HepG2 (cell line): ENCODE measurements at regions of chr1 and their contacts with region 1.

Region 1: DNA sequence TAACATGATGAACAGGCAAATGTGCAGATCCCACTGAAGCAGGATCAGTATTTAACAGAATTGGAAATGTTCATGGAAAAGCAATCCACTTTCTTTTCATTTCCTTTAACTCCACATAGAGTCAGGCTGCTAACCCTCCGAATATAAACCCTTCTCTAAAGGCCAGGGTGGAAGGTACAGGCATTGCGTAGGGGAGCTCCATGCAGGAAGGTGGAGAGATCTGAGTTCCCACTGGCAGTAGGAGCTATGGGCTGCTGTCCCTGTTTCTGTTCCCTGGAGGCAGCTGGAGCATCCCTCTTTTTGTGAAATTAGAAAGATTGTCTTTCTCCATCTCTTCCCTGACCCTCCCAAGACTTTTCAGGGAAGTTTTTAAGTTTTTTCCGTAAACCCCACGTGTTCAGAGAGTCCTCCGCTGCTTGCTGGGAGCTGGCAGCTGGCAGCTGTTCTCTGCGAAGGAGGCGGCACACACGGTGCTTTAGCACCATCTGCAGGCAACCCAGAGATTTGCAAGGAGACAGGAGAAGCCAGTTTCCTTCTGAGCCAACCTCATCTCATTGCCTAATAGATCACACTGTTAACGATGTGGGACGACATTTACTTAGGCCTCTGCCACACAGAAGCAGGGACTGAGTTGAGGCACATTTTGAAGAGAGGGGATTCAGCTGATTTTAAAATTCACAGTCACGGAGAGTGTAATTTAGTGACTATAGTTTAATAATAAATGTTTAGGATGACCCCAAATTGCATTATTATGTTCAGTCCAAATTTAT is 55.4 kb upstream of the HOOK1 start:
- DNase-seq: peak; percentile 66
- ATAC-seq: peak; percentile 96
- H3K4me3 ChIP-seq: 0 out of 6 replicates have a peak overlapping the region, but pooled peaks of 1 of the 3 experiments have one; percentile 6
- H3K27ac ChIP-seq: no peak overlapping the region
- H3K4me1 ChIP-seq: peaks cover 6% of the 10 kb centered on the region
- H3K27me3 ChIP-seq: no peaks in the 10 kb centered on the region
- CTCF ChIP-seq: peak; percentile 97
- EP300 ChIP-seq: no peak
- POLR2A ChIP-seq: no peak
- RAD21 ChIP-seq: peak; percentile 97

Region 2: GRCh38 chr1:58515794-58516401 is 1243.4 kb before region 1 on chr1:
- CTCF ChIA-PET with region 1: no interaction called
- POLR2A ChIA-PET with region 1: no interaction called
- in situ Hi-C with region 1: no loop called
- intact Hi-C with region 1: loop called (anchors 5 kb)
- DNase-seq: peak; percentile 72
- ATAC-seq: peak; percentile 53; the same call in 1 of the 3 replicates
- H3K4me3 ChIP-seq: no peak overlapping the region
- H3K27ac ChIP-seq: no peak overlapping the region
- H3K4me1 ChIP-seq: no peaks in the 10 kb centered on the region
- H3K27me3 ChIP-seq: no peaks in the 10 kb centered on the region
- CTCF ChIP-seq: peak; percentile 71
- EP300 ChIP-seq: no peak
- POLR2A ChIP-seq: no peak
- RAD21 ChIP-seq: peak; percentile 61; the same call in 1 of the 2 replicates

Region 3: DNA sequence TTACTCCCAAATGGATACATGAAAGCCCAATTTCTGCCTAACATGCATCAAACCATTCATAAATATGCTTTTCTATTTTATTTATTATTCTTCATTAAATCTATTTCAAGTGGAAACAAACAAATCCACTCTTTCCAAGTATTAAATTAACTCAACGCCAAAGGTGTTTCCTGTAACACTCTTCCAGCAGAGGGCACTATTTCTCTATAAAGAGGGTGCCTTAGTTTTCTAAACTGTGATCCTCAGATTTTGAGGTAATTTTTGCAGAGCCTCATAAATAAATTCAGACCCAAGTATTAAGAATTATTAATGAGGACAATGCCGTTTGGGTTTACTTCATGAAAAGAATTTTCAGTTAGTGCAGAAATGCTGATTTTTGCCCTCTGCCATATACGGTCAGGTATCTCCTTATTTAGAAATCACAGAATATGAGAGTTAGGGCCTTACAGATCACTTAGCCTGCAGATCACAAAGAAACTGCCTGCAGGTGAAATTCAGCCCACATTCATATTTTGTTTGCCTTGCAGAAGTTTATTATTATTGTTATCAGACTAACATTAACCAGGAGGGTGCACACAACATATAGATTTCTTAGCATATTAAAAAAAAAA is 1019.4 kb before region 1 on chr1:
- CTCF ChIA-PET with region 1: interaction called, 3 read pairs
- POLR2A ChIA-PET with region 1: no interaction called
- in situ Hi-C with region 1: loop called (anchors 10 kb)
- intact Hi-C with region 1: loop called (anchors 1 kb)
- DNase-seq: peak; percentile 52
- ATAC-seq: no peak
- H3K4me3 ChIP-seq: no peak overlapping the region
- H3K27ac ChIP-seq: no peak overlapping the region
- H3K4me1 ChIP-seq: peaks cover 17% of the 10 kb centered on the region
- H3K27me3 ChIP-seq: peaks cover 0 to 7% of the 10 kb centered on the region in 2 experiments; a peak in 1 of 5 replicates
- CTCF ChIP-seq: peak; percentile 78
- EP300 ChIP-seq: no peak
- POLR2A ChIP-seq: no peak
- RAD21 ChIP-seq: peak; percentile 80; the same call in 1 of the 2 replicates

Region 4: GRCh38 chr1:58922302-58923089 is 836.8 kb before region 1 on chr1:
- CTCF ChIA-PET with region 1: no interaction called
- POLR2A ChIA-PET with region 1: no interaction called
- in situ Hi-C with region 1: no loop called
- intact Hi-C with region 1: loop called (anchors 10 kb)
- DNase-seq: no peak
- ATAC-seq: peak; percentile 68
- H3K4me3 ChIP-seq: peak overlapping the region in 1 of 3 experiments; percentile 30; a peak in 1 of 6 replicates
- H3K27ac ChIP-seq: no peak overlapping the region
- H3K4me1 ChIP-seq: peaks cover 14% of the 10 kb centered on the region
- H3K27me3 ChIP-seq: peaks cover 0 to 3% of the 10 kb centered on the region in 2 experiments; a peak in 2 of 5 replicates
- CTCF ChIP-seq: no peak
- EP300 ChIP-seq: no peak
- POLR2A ChIP-seq: no peak
- RAD21 ChIP-seq: no peak

Region 5: GRCh38 chr1:59730759-59731478 is 28.4 kb before region 1 on chr1:
- CTCF ChIA-PET with region 1: no interaction called
- POLR2A ChIA-PET with region 1: interaction called, 13 read pairs
- in situ Hi-C with region 1: no loop called
- intact Hi-C with region 1: no loop called
- DNase-seq: peak; percentile 93
- ATAC-seq: peak; percentile 96
- H3K4me3 ChIP-seq: peak overlapping the region in 1 of 3 experiments; percentile 34; a peak in 1 of 6 replicates
- H3K27ac ChIP-seq: peak overlapping the region; percentile 73
- H3K4me1 ChIP-seq: peaks cover 41% of the 10 kb centered on the region
- H3K27me3 ChIP-seq: no peaks in the 10 kb centered on the region
- CTCF ChIP-seq: no peak
- EP300 ChIP-seq: peak in 1 of 2 experiments; percentile 61; a peak in 2 of 4 replicates
- POLR2A ChIP-seq: 0 out of 4 replicates have a peak, but pooled peaks of 1 of the 2 experiments have one; percentile 40
- RAD21 ChIP-seq: no peak